Sciatic nerve (tissue), 2 donors: ENCODE measurements at regions of chr9 and their contacts with region 1.

Region 1: DNA sequence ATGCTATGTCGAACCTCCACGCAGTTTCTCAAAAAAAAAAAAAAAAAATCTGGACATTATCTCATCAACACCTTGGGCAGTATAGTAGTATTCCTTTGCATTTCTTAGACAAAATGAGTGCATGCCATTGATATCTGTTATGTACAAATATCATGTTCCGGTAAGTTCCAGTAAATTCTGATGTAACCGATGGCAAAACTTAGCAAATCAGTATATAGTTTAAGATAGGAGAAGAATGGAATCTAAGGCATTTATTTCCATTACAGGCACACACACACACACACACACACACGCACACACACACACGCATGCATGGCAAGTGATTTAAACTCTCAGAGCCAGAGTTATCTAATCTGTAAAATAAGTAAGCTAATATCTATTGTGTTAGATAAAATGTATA is 356.5 kb upstream of the TUSC1 start:
- DNase-seq: no peak
- ATAC-seq: no peak

Region 2: GRCh38 chr9:26561928-26562327 is 527.1 kb after region 1 on chr9:
- intact Hi-C with region 1: loop called (anchors 5 kb)
- DNase-seq: no peak
- ATAC-seq: no peak